K562 (cell line): ENCODE measurements at regions of chr20 and their contacts with region 1.

Region 1: DNA sequence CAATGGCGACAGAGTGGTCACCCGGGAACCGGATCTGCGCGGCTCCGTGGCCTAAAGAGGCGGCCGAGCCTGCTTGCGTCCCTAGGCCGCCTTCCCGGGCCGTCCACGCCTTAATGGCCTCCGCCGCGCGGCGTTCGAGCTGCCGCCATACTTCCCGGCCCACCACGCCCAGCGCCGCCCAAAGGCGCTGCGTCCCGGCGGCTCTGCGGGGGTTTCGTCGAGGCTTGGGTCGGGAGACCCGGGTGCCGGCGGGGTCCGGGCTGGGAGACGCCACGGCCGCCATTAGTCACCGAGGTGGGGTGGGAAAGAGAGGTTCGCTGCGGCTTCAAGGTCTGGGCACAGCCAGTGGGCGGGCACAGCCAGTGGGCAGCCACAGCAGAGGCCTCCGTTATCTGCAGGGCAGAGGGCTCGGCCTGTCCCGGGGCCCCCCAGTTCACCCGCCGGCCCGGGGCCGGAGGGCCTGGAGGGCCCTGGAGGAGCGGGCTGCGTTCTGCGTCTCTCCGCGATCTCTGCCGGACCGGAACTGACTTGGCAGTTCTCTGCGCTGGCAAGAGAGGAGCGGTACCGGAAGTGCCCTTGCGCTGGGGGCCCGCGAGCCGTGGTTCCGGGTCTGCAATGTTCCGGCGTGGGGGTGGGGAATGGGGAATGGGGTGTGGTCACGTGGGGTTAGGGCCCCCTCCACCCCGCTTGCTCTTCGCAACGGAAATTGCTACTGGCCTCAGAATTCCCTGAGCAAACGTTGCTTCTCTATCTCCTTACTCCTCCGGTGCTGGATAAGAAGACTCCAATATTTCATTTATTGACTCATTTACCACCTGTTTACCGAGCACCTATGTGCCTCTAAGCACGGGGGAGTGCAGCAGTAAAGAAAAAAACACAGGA is 82.3 kb downstream of the CNBD2 start:
- DNase-seq: peak; percentile 94 to 97 (median 94)
- ATAC-seq: peak; percentile 94
- H3K4me3 ChIP-seq: peak overlapping the region; percentile 98
- H3K27ac ChIP-seq: peak overlapping the region; percentile 99
- H3K4me1 ChIP-seq: peaks cover 8 to 26% of the 10 kb centered on the region in 2 experiments
- H3K27me3 ChIP-seq: no peaks in the 10 kb centered on the region
- CTCF ChIP-seq: no peak
- EP300 ChIP-seq: peak; percentile 76
- POLR2A ChIP-seq: peak; percentile 97
- RAD21 ChIP-seq: peak in 1 of 2 experiments; percentile 13; a peak in 1 of 4 replicates

Region 2: GRCh38 chr20:35994994-35995453 is 55.7 kb before region 1 on chr20:
- CTCF ChIA-PET with region 1: no interaction called
- POLR2A ChIA-PET with region 1: interaction called, 4 read pairs
- in situ Hi-C with region 1: no loop called
- intact Hi-C with region 1: loop called (anchors 5 kb)
- DNase-seq: peak; percentile 67 to 90 (median 73)
- ATAC-seq: peak; percentile 97
- H3K4me3 ChIP-seq: no peak overlapping the region
- H3K27ac ChIP-seq: no peak overlapping the region
- H3K4me1 ChIP-seq: peaks cover 0 to 11% of the 10 kb centered on the region in 2 experiments; a peak in 4 of 5 replicates
- H3K27me3 ChIP-seq: no peaks in the 10 kb centered on the region; a peak in 1 of 5 replicates
- CTCF ChIP-seq: peak; percentile 91 to 96 (median 93)
- EP300 ChIP-seq: 0 out of 2 replicates have a peak, but pooled peaks have one; percentile 21
- POLR2A ChIP-seq: no peak
- RAD21 ChIP-seq: peak; percentile 95 to 99

Region 3: DNA sequence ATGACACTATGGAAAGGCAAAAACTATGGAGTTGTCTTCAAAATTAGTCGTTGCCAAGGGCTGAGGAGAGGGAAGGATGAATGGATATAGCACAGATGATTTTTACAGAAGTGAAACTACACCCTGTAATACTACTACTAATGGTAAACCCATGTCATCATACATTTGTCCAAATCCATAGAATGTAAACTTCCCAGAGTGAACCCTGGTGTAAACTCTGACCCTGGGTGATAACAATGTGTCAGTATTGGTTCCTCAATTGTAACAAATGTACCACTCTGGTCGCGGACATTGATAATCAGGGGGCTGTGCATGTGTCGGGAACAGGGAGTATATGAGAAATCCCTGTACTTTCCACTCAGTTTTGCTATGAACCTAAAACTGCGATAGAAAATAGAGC is 10.1 kb before region 1 on chr20:
- CTCF ChIA-PET with region 1: no interaction called
- POLR2A ChIA-PET with region 1: interaction called, 14 read pairs
- in situ Hi-C with region 1: no loop called
- intact Hi-C with region 1: no loop called
- DNase-seq: no peak
- ATAC-seq: no peak
- H3K4me3 ChIP-seq: no peak overlapping the region
- H3K27ac ChIP-seq: no peak overlapping the region
- H3K4me1 ChIP-seq: peaks cover 8 to 24% of the 10 kb centered on the region in 2 experiments; a peak in 4 of 5 replicates
- H3K27me3 ChIP-seq: no peaks in the 10 kb centered on the region
- CTCF ChIP-seq: no peak
- EP300 ChIP-seq: no peak
- POLR2A ChIP-seq: no peak
- RAD21 ChIP-seq: no peak

Region 4: DNA sequence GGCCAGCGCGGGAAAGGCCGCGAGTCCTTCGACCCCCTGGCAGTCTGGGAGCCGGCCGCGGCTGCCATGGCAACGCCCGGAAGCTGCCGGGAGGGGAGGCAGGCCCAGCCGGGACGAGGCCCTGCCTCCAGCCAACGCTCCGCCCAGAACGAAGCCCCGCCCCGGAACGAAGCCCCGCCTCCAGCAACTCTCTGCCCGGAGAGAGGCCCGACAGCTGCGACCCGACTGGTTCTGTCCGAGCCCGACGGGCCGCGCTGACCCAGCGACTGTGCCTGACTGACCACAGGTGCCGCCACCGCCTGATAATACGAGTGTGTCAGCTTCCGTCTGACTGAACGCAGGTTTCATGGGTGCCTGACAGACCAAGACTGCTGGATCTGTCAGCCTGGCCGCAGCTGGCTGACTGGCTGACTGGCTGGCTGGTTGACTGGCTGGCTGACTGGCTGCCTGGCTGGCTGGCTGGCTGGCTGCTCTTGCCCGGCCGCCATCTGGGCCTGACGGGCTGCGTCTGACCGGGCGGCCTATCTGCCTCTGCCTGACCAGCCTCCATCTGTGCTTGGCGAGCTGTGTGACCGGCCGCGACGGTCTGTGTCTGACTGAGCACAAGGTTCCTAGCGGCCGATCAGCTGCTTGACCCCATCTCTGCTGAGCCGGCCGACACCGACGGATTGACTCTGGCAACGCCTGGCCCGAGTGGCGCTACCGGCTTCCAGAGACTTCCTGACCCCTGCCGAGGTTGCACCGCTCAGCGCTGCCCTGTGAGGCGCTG is 14.2 kb after region 1 on chr20:
- CTCF ChIA-PET with region 1: no interaction called
- POLR2A ChIA-PET with region 1: interaction called, 12 read pairs
- in situ Hi-C with region 1: no loop called
- intact Hi-C with region 1: no loop called
- DNase-seq: peak; percentile 90 to 98 (median 97)
- ATAC-seq: peak; percentile 99
- H3K4me3 ChIP-seq: peak overlapping the region; percentile 49
- H3K27ac ChIP-seq: peak overlapping the region; percentile 27; the same call in 1 of the 3 replicates
- H3K4me1 ChIP-seq: peaks cover 15 to 20% of the 10 kb centered on the region in 2 experiments
- H3K27me3 ChIP-seq: no peaks in the 10 kb centered on the region
- CTCF ChIP-seq: no peak
- EP300 ChIP-seq: no peak
- POLR2A ChIP-seq: peak; percentile 74
- RAD21 ChIP-seq: peak in 1 of 2 experiments; percentile 2; a peak in 1 of 4 replicates

Region 5: GRCh38 chr20:36085686-36086267 is 35.1 kb after region 1 on chr20:
- CTCF ChIA-PET with region 1: no interaction called
- POLR2A ChIA-PET with region 1: interaction called, 4 read pairs
- in situ Hi-C with region 1: no loop called
- intact Hi-C with region 1: loop called (anchors 5 kb)
- DNase-seq: peak; percentile 67 to 91 (median 76)
- ATAC-seq: peak; percentile 98
- H3K4me3 ChIP-seq: no peak overlapping the region
- H3K27ac ChIP-seq: peak overlapping the region; percentile 77
- H3K4me1 ChIP-seq: peaks cover 12 to 35% of the 10 kb centered on the region in 2 experiments
- H3K27me3 ChIP-seq: no peaks in the 10 kb centered on the region
- CTCF ChIP-seq: peak in 1 of 3 experiments; percentile 7; a peak in 1 of 6 replicates
- EP300 ChIP-seq: peak; percentile 48
- POLR2A ChIP-seq: no peak
- RAD21 ChIP-seq: peak; percentile 10 to 14; a peak in 1 of 4 replicates

Region 6: DNA sequence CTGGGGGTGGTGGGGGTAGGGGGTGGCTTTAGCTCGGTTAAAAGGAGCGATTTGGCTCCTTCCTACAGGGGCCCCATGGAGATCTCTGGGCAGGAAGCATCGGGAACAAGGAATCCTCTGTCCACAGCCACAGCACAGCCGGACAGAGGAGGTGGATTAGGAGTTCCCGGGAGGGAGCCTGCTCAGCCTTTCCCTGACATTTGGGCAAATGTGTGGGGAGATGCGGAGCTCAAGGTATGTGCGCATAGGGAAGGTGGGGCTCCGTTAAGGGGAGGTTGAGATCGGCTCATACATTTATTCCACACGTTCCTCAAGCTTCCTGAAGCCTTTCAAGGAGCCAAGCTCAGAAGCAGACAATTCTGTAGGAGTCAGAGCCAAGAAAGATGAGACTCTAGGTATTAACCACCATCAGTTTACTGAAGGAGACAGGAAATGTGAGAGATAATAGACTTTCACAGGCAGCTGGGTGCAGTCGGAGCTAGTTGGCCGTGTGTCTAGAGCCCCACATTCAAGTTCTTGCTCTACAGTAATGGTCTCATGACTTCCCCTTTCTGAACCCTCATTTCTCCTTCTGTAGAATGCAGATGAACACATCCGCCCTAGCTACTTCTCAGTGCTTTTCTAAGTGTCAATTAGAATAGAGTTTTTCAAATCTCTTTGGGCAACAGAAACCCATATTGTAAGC is 63.0 kb after region 1 on chr20:
- CTCF ChIA-PET with region 1: no interaction called
- POLR2A ChIA-PET with region 1: interaction called, 3 read pairs
- in situ Hi-C with region 1: no loop called
- intact Hi-C with region 1: loop called (anchors 5 kb)
- DNase-seq: no peak
- ATAC-seq: peak; percentile 54; the same call in 2 of the 3 replicates
- H3K4me3 ChIP-seq: no peak overlapping the region
- H3K27ac ChIP-seq: no peak overlapping the region
- H3K4me1 ChIP-seq: peaks cover 0 to 8% of the 10 kb centered on the region in 2 experiments; a peak in 3 of 5 replicates
- H3K27me3 ChIP-seq: no peaks in the 10 kb centered on the region
- CTCF ChIP-seq: no peak
- EP300 ChIP-seq: no peak
- POLR2A ChIP-seq: no peak
- RAD21 ChIP-seq: no peak